ENCODE measurements at regions of chr2 and their contacts with region 1.

Region 1: GRCh38 chr2:20650880-20651730 is at the start of gene HS1BP3:
- DNase-seq: peak; percentile 89 to 97 (median 95)
- ATAC-seq: peak; percentile 98
- H3K4me3 ChIP-seq: peak within 1 kb of the TSS; percentile 72
- H3K27ac ChIP-seq: peak within 1 kb of the TSS; percentile 57
- H3K4me1 ChIP-seq: peaks cover 6 to 20% of the 10 kb centered on the region in 2 experiments; a peak in 3 of 5 replicates
- H3K27me3 ChIP-seq: peaks cover 0 to 18% of the 10 kb centered on the region in 2 experiments; a peak in 2 of 5 replicates
- CTCF ChIP-seq: peak; percentile 64 to 93 (median 83); a peak in 5 of 6 replicates
- EP300 ChIP-seq: peak; percentile 40; the same call in 1 of the 2 replicates
- POLR2A ChIP-seq: peak; percentile 83
- RAD21 ChIP-seq: peak; percentile 89 to 90
- polyA plus RNA-seq, gene HS1BP3: 0.41 to 0.63 TPM

Region 2: DNA sequence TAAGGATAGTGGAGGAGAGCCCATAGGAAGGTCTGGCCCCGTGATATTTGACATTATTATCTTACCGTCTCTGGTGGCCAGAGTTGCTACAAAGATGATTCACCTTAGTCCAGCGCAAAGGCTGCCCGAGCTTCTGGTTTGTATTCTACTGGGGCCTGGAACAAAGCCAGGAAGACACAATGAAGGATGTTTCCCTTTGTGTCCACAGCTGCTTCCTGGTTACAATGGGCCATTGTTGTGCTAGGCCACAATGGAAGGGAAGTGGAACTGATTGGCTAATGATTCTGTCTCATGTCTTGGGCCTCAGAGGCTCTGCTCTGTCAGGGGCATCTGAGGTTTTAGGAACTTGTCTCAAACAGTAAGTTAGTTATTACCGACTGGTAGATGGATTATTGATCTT is 604.9 kb after region 1 on chr2:
- CTCF ChIA-PET with region 1: no interaction called
- POLR2A ChIA-PET with region 1: no interaction called
- in situ Hi-C with region 1: loop called (anchors 25 kb)
- intact Hi-C with region 1: no loop called
- DNase-seq: peak in 2 of 4 experiments; percentile 20 to 63
- ATAC-seq: peak; percentile 66
- H3K4me3 ChIP-seq: no peak overlapping the region
- H3K27ac ChIP-seq: no peak overlapping the region
- H3K4me1 ChIP-seq: peaks cover 0 to 15% of the 10 kb centered on the region in 2 experiments; a peak in 2 of 5 replicates
- H3K27me3 ChIP-seq: no peaks in the 10 kb centered on the region
- CTCF ChIP-seq: no peak
- EP300 ChIP-seq: no peak
- POLR2A ChIP-seq: no peak
- RAD21 ChIP-seq: no peak